ENCODE measurements at regions of chr15 and their contacts with region 1.

Region 1: DNA sequence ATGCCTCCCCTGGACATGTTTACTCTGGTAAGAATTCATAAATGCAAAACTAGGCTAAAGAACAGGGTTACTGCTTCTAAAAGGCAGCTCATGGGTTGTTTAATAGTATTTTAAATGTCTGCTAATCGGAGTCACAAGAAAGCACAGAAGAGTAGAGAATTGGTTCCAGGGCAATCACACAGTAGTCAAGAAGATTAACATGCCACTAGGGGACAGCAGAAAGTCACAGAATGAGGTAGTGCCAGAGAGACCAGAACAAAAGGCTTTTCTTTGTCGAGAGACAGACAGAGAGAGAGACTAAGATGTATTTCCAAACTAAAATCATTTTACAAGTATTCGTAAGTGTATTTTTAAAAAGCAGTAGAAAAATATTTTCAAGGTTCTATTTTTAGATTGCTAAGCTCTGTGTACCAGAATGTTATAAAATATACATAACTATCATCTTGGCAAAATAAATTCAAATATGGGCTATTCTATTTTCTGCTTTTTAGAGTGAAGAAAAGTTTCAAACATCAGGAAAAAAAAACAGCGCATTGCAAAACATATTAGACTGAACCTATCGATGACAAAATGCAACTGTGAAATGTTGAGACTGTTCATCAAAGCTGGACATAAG is 78.3 kb upstream of the CDIN1 start:
- DNase-seq: no peak
- H3K4me3 ChIP-seq: no peak overlapping the region
- H3K27ac ChIP-seq: no peak overlapping the region
- H3K4me1 ChIP-seq: peaks cover 0 to 12% of the 10 kb centered on the region in 2 donors
- H3K27me3 ChIP-seq: no peaks in the 10 kb centered on the region
- CTCF ChIP-seq: peak; percentile 7 to 80 (median 76)

Region 2: DNA sequence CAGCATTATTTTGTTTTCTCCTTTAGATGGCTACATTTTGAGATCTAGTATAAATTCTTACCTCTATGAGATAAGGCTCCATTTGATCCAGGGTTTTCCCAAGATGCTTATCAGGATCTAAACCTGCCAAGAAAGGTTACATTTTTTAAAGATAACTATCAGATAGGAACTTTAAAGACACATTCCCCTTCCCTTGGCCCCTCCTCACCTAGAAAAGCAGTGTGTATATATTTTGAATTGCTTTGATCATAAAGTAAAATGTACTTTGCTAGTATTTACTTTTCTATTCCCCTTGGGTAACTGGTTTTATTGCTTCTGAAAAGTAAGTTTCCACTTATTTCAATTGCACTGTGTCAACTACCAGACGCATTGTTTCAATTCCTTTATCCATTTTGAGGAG is 1090.4 kb before region 1 on chr15:
- intact Hi-C with region 1: no loop called
- DNase-seq: no peak
- H3K4me3 ChIP-seq: no peak overlapping the region
- H3K27ac ChIP-seq: no peak overlapping the region
- H3K4me1 ChIP-seq: no peaks in the 10 kb centered on the region
- H3K27me3 ChIP-seq: no peaks in the 10 kb centered on the region
- CTCF ChIP-seq: no peak

Region 3: DNA sequence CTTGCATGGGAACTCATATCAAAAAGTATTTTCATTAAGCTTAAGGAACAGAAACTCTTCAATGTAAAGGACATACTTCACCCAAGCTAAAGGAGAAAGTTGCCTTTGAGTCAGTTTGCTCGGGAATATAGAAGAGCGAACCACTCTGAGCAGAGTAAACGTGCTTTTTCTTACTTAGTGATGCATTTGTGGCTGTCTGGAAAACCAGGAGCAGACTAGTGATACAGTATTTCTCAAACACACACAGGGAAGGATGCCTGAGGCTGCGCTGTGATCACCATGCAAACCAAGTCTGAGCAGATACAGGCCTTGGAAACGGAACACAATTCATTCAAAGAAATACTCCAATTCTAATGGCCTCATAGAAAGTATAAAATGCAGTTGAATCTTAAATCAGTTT is 42.8 kb before region 1 on chr15:
- intact Hi-C with region 1: no loop called
- DNase-seq: no peak
- H3K4me3 ChIP-seq: no peak overlapping the region
- H3K27ac ChIP-seq: no peak overlapping the region
- H3K4me1 ChIP-seq: no peaks in the 10 kb centered on the region
- H3K27me3 ChIP-seq: no peaks in the 10 kb centered on the region
- CTCF ChIP-seq: no peak

Region 4: DNA sequence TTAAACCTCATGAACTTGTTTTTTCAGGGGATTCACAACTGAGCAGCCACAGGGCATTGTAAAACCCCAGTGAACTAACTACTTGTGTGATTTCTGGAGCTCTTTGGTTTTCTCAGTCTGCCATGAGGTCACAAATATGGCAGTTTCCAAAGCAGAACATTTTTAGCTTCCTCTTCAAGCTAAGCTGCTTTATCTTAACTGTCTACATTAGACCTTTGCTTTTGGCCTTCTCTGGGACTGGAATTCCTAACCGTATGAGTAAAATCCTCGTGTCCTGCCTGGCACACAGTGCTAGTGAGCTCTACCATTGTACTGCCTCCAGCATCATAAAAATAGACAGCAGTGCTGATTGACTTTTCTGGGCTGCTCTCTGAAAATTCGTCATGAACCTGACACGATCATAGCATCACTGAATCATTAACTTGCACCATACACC is 100.3 kb after region 1 on chr15:
- intact Hi-C with region 1: no loop called
- DNase-seq: peak; percentile 27 to 90
- H3K4me3 ChIP-seq: peak overlapping the region in 1 of 2 donors; percentile 54
- H3K27ac ChIP-seq: peak overlapping the region; percentile 91 to 94
- H3K4me1 ChIP-seq: peaks cover 2 to 15% of the 10 kb centered on the region in 2 donors
- H3K27me3 ChIP-seq: no peaks in the 10 kb centered on the region
- CTCF ChIP-seq: no peak

Region 5: DNA sequence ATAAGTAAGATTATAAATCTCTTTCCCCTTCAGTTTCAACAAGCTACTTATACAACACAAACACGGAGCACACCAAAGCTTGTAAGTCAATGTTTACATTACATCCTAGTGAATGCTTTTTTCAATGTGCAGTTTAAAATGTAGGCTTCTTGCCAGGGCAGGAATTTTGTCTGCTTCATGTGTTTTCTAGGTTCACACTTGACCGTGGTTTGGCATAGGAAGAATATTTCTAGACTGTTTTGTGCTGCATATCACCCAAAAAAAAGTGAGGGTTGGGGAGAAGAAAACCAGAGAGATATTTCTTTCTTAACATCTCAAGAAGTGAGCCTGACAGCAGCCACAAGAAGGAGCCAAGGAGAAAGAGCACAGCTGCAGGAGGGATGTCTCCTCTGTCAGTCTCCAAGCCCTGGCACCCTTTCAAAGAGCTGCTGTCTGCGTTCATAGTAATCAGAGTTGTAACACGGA is 343.4 kb after region 1 on chr15:
- intact Hi-C with region 1: no loop called
- DNase-seq: no peak
- H3K4me3 ChIP-seq: no peak overlapping the region
- H3K27ac ChIP-seq: no peak overlapping the region
- H3K4me1 ChIP-seq: no peaks in the 10 kb centered on the region
- H3K27me3 ChIP-seq: no peaks in the 10 kb centered on the region
- CTCF ChIP-seq: no peak

Region 6: GRCh38 chr15:37134699-37135131 is 633.5 kb after region 1 on chr15:
- intact Hi-C with region 1: loop called (anchors 5 kb)
- DNase-seq: no peak
- H3K4me3 ChIP-seq: no peak overlapping the region
- H3K27ac ChIP-seq: no peak overlapping the region
- H3K4me1 ChIP-seq: no peaks in the 10 kb centered on the region
- H3K27me3 ChIP-seq: no peaks in the 10 kb centered on the region
- CTCF ChIP-seq: peak; percentile 30 to 77 (median 75)

Measured in ascending aorta (tissue), 2 donors.